ENCODE measurements at regions of chr4 and their contacts with region 1.

Region 1: DNA sequence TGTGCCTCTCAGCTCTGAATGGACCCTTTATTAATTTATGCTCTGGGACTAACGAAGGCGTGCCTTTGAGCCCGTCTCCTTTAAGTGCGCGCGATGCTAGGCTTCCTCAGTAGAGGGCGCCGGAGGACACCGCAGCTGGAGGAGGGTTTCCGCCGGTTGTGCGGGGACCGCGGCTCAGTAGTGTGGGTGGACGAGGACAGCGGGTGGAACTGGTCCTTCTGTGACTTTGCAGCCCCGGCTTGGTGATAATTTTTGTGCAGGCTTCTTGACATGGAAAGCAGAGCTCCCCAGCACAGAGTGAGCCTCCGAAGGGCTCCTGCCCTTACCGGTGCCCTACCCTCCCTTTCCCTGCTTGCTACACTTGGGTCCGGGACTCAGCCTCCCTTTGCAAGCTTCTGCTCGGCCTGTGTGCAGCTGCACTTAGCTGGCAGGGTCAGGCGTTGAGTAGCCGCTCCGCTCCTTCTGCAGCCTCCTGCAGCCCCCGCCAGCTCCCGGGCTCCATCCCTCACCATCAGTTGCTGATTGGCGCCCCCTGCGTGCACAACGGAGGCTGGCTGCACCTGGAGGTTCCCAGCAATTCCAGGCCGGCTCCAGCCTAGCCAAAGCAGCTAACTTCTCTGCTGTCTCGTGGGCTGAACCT is 26.8 kb upstream of the BOD1L1 start:
- DNase-seq: peak; percentile 86
- ATAC-seq: peak; percentile 94
- H3K4me3 Mint-ChIP-seq: peak overlapping the region; percentile 66
- H3K27ac Mint-ChIP-seq: no peak overlapping the region
- H3K4me1 Mint-ChIP-seq: peaks cover 14% of the 10 kb centered on the region
- H3K27me3 Mint-ChIP-seq: peaks cover 19% of the 10 kb centered on the region

Region 2: GRCh38 chr4:13627606-13628301 is 26.5 kb before region 1 on chr4 and contains the start of gene BOD1L1:
- CTCF ChIA-PET with region 1: interaction called, 17 read pairs
- DNase-seq: peak; percentile 87
- ATAC-seq: peak; percentile 85
- H3K4me3 Mint-ChIP-seq: peak within 1 kb of the TSS; percentile 88
- H3K27ac Mint-ChIP-seq: peak within 1 kb of the TSS; percentile 90
- H3K4me1 Mint-ChIP-seq: peaks cover 29% of the 10 kb centered on the region
- H3K27me3 Mint-ChIP-seq: no peaks in the 10 kb centered on the region
- total RNA-seq, gene BOD1L1: 28.4 to 31.2 TPM

Region 3: GRCh38 chr4:13640149-13640940 is 13.9 kb before region 1 on chr4:
- CTCF ChIA-PET with region 1: interaction called, 20 read pairs
- DNase-seq: no peak
- ATAC-seq: no peak
- H3K4me3 Mint-ChIP-seq: no peak overlapping the region
- H3K27ac Mint-ChIP-seq: no peak overlapping the region
- H3K4me1 Mint-ChIP-seq: no peaks in the 10 kb centered on the region
- H3K27me3 Mint-ChIP-seq: peaks cover 43% of the 10 kb centered on the region

Region 4: DNA sequence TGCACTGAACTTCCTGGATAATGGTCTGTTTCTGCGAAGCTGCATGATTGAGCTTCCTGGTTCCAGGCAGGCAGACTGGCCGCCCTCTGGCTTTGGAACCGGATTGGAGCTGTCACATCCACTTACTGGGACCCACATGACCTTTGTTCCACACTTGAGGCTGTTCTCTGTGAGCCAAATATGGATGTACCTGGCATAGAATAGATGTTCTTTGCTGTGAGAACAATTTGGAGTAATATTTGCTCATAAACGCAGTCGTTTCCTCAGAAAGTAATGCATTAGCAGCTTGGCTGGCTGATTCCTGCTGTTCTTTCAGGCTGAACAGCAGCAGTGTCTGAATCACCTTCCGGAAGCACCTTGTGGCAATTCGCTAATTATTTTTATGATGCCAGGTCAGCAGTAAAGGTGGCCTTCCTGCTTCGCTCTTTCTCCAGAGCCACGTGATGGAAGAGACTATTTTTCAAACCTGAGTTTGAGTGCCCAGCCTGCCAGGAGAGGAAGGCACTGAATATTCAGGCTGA is 51.3 kb after region 1 on chr4:
- CTCF ChIA-PET with region 1: no interaction called
- DNase-seq: no peak
- ATAC-seq: no peak
- H3K4me3 Mint-ChIP-seq: no peak overlapping the region
- H3K27ac Mint-ChIP-seq: no peak overlapping the region
- H3K4me1 Mint-ChIP-seq: no peaks in the 10 kb centered on the region
- H3K27me3 Mint-ChIP-seq: no peaks in the 10 kb centered on the region